ENCODE measurements at regions of chr19 and their contacts with region 1.

Region 1: GRCh38 chr19:29873024-29873800 is 61.4 kb downstream of the CCNE1 start:
- DNase-seq: peak in 1 of 2 experiments; percentile 94
- H3K4me3 ChIP-seq: peak overlapping the region; percentile 24 to 70 (median 48)
- H3K27ac ChIP-seq: no peak overlapping the region
- H3K4me1 ChIP-seq: peaks cover 0 to 4% (median 1%) of the 10 kb centered on the region in 4 experiments; a peak in 4 of 7 replicates
- H3K27me3 ChIP-seq: peaks cover 0 to 14% (median 10%) of the 10 kb centered on the region in 4 experiments; a peak in 6 of 7 replicates
- CTCF ChIP-seq: peak; percentile 63 to 91 (median 79)
- EP300 ChIP-seq: no peak
- POLR2A ChIP-seq: no peak
- RAD21 ChIP-seq: peak; percentile 87 to 90

Region 2: GRCh38 chr19:29761575-29762232 is 111.5 kb before region 1 on chr19:
- CTCF ChIA-PET with region 1: interaction called, 22 read pairs
- POLR2A ChIA-PET with region 1: interaction called, 4 read pairs
- DNase-seq: no peak
- H3K4me3 ChIP-seq: no peak overlapping the region
- H3K27ac ChIP-seq: no peak overlapping the region
- H3K4me1 ChIP-seq: no peaks in the 10 kb centered on the region; a peak in 1 of 7 replicates
- H3K27me3 ChIP-seq: no peaks in the 10 kb centered on the region; a peak in 1 of 7 replicates
- CTCF ChIP-seq: no peak
- EP300 ChIP-seq: no peak
- POLR2A ChIP-seq: no peak
- RAD21 ChIP-seq: no peak

Region 3: GRCh38 chr19:29785955-29786589 is 87.1 kb before region 1 on chr19:
- CTCF ChIA-PET with region 1: interaction called, 41 read pairs
- POLR2A ChIA-PET with region 1: no interaction called
- DNase-seq: peak in 1 of 2 experiments; percentile 77
- H3K4me3 ChIP-seq: no peak overlapping the region
- H3K27ac ChIP-seq: no peak overlapping the region
- H3K4me1 ChIP-seq: no peaks in the 10 kb centered on the region
- H3K27me3 ChIP-seq: no peaks in the 10 kb centered on the region
- CTCF ChIP-seq: peak; percentile 72 to 86 (median 85)
- EP300 ChIP-seq: no peak
- POLR2A ChIP-seq: no peak
- RAD21 ChIP-seq: peak; percentile 74 to 80

Region 4: DNA sequence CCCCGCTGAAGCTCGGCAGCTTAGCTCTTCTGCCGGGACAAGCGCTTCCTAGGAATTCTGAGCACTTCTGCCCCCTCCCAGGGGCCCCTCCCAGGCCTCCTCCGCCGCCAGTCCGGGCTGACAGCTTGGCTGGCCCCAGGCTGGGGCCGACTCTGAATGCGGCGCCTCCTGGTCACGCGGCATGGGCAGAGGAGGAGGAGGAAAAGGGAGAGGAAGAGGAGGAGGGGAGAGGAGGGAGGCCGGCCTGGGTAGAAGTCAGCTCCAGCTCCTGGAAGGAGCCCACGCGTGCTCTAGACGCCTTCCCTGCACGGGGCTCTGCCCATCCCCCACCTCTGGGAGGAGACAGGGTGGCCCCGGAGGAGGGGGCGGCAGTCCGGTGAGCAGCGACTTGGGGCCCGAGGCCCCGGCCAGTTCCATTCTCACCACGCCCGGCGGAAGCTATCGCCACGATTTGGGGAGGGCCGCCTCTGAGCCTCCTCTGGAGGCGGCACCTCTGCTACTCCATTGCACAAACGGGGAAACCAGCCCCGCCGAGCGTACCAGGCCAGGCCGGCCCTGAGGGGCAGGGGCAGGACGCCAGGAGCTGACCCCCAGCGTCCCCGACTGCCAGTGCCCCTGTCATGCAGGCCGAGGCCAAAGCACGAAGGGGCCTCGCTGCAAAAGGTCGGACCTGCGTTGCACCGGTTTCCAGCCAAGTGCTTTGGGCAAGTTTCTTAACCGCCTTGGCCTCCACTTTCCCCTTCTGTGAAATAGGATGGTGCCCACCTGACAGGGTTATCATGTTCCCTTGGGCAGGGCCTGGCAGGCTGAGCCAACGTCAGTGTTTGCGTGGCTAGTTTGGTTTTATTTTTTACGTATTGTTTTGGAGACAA is 29.8 kb before region 1 on chr19:
- CTCF ChIA-PET with region 1: interaction called, 10 read pairs
- POLR2A ChIA-PET with region 1: no interaction called
- DNase-seq: peak in 1 of 2 experiments; percentile 63
- H3K4me3 ChIP-seq: peak overlapping the region; percentile 32 to 86 (median 48)
- H3K27ac ChIP-seq: no peak overlapping the region
- H3K4me1 ChIP-seq: peaks cover 0 to 15% (median 4%) of the 10 kb centered on the region in 4 experiments; a peak in 5 of 7 replicates
- H3K27me3 ChIP-seq: peaks cover 0 to 10% (median 7%) of the 10 kb centered on the region in 4 experiments; a peak in 4 of 7 replicates
- CTCF ChIP-seq: no peak
- EP300 ChIP-seq: no peak
- POLR2A ChIP-seq: no peak
- RAD21 ChIP-seq: no peak

Region 5: DNA sequence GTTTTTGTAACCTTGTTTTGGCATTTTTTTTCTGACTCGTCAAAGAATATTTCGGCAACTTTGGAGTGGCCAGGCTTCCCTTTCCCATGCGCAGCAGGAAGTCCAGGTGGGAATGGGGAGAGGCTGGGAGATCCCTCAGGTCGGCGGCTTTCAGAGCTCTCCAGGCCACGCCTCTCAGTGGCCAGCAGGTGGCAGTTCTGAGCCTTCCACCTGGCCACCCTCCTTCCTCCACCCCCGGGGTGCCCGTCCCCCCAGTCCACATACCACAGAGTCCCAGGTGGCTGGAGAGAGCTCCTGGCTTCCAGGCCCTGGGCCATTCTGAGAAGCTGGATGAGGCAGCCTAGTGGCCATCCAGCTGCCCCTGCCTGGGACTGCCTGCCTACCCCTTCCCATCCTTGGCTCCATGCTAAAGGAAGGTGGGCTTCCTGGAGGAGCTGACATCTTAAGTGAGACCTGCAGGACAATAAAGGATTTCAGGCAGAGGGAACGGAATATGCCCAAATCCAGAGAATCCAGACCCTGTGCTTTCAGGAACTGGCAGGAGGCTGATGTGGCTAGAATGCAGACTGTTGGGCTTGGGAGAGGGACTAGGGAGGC is 15.1 kb before region 1 on chr19:
- CTCF ChIA-PET with region 1: interaction called, 134 read pairs
- POLR2A ChIA-PET with region 1: no interaction called
- DNase-seq: peak in 1 of 2 experiments; percentile 82
- H3K4me3 ChIP-seq: no peak overlapping the region
- H3K27ac ChIP-seq: no peak overlapping the region
- H3K4me1 ChIP-seq: peaks cover 0 to 9% (median 7%) of the 10 kb centered on the region in 4 experiments; a peak in 6 of 7 replicates
- H3K27me3 ChIP-seq: no peaks in the 10 kb centered on the region
- CTCF ChIP-seq: peak; percentile 62 to 87 (median 84)
- EP300 ChIP-seq: no peak
- POLR2A ChIP-seq: no peak
- RAD21 ChIP-seq: peak; percentile 48 to 62